CD4-positive, alpha-beta memory T cell (primary cell): ENCODE measurements at regions of chr19 and their contacts with region 1.

Region 1: DNA sequence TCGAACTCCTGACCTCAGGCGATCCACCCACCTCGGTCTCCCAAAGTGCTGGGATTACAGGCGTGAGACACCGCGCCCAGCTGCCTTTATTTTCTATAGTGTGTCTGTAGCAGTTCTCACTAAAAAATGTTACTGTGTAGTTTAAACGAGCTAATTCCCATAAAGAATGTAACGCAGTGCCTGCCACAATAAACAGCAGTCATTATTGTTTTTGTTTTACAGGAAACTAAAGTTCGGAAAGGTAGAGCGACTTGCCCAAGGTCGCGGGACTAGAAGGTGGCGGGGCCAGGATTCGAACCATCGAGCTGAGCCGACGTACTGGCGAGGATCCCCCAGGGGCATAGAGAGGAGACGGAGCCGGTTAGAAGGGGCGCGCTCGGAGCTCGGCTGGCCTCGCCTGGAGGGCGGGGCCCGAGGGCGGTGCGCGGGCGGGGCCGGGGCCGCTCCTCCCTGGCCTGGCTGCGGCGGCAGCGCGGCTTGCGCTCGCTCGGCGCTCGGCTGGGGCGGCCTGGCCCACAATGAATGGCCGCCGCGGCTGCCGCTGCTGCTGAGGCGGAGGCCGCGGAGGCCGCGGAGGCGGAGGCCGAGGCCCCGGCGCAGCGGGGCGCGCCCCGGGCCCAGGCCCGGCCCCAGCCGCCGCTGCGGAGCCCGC is at the start of gene NACC1:
- DNase-seq: peak; percentile 84 to 90 (median 88)
- H3K4me3 ChIP-seq: peak within 1 kb of the TSS; percentile 79 to 94
- H3K4me3 Mint-ChIP-seq: peak within 1 kb of the TSS; percentile 91 to 98 (median 96)
- H3K27ac ChIP-seq: peak within 1 kb of the TSS; percentile 65
- H3K27ac Mint-ChIP-seq: peak within 1 kb of the TSS; percentile 89 to 97 (median 92)
- H3K4me1 ChIP-seq: peaks cover 60% of the 10 kb centered on the region
- H3K4me1 Mint-ChIP-seq: peaks cover 22 to 67% (median 46%) of the 10 kb centered on the region in 4 donors
- H3K27me3 ChIP-seq: no peaks in the 10 kb centered on the region
- H3K27me3 Mint-ChIP-seq: no peaks in the 10 kb centered on the region
- total RNA-seq, gene NACC1: 25.8 to 34.1 TPM

Region 2: GRCh38 chr19:13104360-13104847 is 13.5 kb before region 1 on chr19:
- CTCF ChIA-PET with region 1: interaction called, 35 read pairs
- POLR2A ChIA-PET with region 1: interaction called, 69 read pairs
- intact Hi-C with region 1: loop called (anchors 1 kb)
- DNase-seq: peak; percentile 50 to 74 (median 60)
- H3K4me3 ChIP-seq: peak overlapping the region; percentile 65 to 73
- H3K4me3 Mint-ChIP-seq: peak overlapping the region; percentile 87 to 97 (median 92)
- H3K27ac ChIP-seq: peak overlapping the region; percentile 48
- H3K27ac Mint-ChIP-seq: peak overlapping the region; percentile 83 to 94 (median 93)
- H3K4me1 ChIP-seq: peaks cover 63% of the 10 kb centered on the region
- H3K4me1 Mint-ChIP-seq: peaks cover 18 to 49% (median 32%) of the 10 kb centered on the region in 4 donors
- H3K27me3 ChIP-seq: no peaks in the 10 kb centered on the region
- H3K27me3 Mint-ChIP-seq: no peaks in the 10 kb centered on the region

Region 3: DNA sequence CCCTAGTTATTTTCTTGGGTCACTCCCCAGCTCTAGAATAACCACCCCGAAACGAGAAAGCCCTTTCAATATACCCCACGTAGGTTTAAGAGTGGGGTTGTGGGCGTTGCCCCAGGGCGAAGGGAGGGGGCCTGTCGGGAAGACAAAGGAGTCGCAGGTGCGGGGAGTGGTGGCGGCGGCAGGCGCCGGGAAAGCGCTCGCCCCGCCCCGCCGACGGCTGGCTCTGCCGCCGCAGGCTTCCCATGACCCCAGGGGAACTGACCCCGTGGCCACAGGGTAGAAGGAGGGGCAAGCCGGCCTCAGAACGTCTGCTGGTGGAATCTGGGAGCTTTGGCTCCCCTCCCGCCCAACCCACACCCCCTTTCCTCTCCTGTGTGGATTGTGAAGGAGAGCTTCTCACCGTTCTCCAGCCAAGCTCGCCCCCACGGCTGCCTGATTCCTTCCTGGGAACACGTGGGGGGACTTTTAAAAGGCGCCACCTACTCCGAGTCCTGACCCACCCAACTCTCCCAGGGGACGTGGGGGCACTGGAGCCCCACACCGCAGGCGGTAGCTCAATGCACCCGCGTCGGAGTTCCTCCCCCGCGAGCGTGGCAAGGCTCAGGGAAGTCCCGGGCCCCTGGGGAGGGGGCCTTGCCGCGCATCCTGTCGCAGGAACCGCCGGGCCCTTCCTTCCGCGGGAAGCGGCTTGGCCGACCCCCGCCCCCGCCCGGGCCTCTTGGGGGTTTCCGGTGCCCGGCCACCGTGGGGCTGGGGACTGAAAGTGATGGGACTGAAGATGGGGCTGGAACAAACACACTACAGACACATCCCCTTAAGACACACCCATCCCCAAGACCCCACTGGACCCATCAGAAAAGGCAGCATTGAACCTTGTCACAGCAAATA is 37.8 kb after region 1 on chr19:
- CTCF ChIA-PET with region 1: interaction called, 3 read pairs
- POLR2A ChIA-PET with region 1: interaction called, 132 read pairs
- intact Hi-C with region 1: loop called (anchors 1 kb)
- DNase-seq: peak; percentile 80 to 89 (median 83)
- H3K4me3 ChIP-seq: peak overlapping the region; percentile 98 to 100
- H3K4me3 Mint-ChIP-seq: peak overlapping the region; percentile 95 to 99 (median 99)
- H3K27ac ChIP-seq: peak overlapping the region; percentile 98
- H3K27ac Mint-ChIP-seq: peak overlapping the region; percentile 98 to 99 (median 99)
- H3K4me1 ChIP-seq: peaks cover 48% of the 10 kb centered on the region
- H3K4me1 Mint-ChIP-seq: peaks cover 27 to 77% (median 38%) of the 10 kb centered on the region in 4 donors
- H3K27me3 ChIP-seq: no peaks in the 10 kb centered on the region
- H3K27me3 Mint-ChIP-seq: peaks cover 0 to 3% of the 10 kb centered on the region in 2 donors

Region 4: GRCh38 chr19:13172068-13172896 is 54.4 kb after region 1 on chr19:
- CTCF ChIA-PET with region 1: interaction called, 3 read pairs
- POLR2A ChIA-PET with region 1: interaction called, 29 read pairs
- intact Hi-C with region 1: loop called (anchors 2 kb)
- DNase-seq: peak; percentile 62 to 92 (median 63)
- H3K4me3 ChIP-seq: peak overlapping the region; percentile 18 to 46
- H3K4me3 Mint-ChIP-seq: peak overlapping the region; percentile 83 to 94 (median 86)
- H3K27ac ChIP-seq: peak overlapping the region; percentile 53
- H3K27ac Mint-ChIP-seq: peak overlapping the region; percentile 94 to 99 (median 98)
- H3K4me1 ChIP-seq: peaks cover 67% of the 10 kb centered on the region
- H3K4me1 Mint-ChIP-seq: peaks cover 37 to 78% (median 50%) of the 10 kb centered on the region in 4 donors
- H3K27me3 ChIP-seq: no peaks in the 10 kb centered on the region
- H3K27me3 Mint-ChIP-seq: no peaks in the 10 kb centered on the region